Mammary epithelial cell (primary cell): ENCODE measurements at regions of chr2 and their contacts with region 1.

Region 1: GRCh38 chr2:230007931-230008707 is 60.6 kb downstream of the SLC16A14 start:
- DNase-seq: peak; percentile 47
- H3K4me3 ChIP-seq: no peak overlapping the region
- H3K27ac ChIP-seq: no peak overlapping the region
- H3K4me1 ChIP-seq: no peaks in the 10 kb centered on the region
- H3K27me3 ChIP-seq: no peaks in the 10 kb centered on the region
- CTCF ChIP-seq: peak; percentile 75 to 82

Region 2: GRCh38 chr2:229815858-229816257 is 192.3 kb before region 1 on chr2:
- CTCF ChIA-PET with region 1: no interaction called
- dilution Hi-C with region 1: no loop called
- in situ Hi-C with region 1: no loop called
- intact Hi-C with region 1: loop called (anchors 10 kb)
- DNase-seq: peak; percentile 68
- H3K4me3 ChIP-seq: no peak overlapping the region
- H3K27ac ChIP-seq: peak overlapping the region; percentile 49
- H3K4me1 ChIP-seq: peaks cover 12% of the 10 kb centered on the region
- H3K27me3 ChIP-seq: no peaks in the 10 kb centered on the region
- CTCF ChIP-seq: no peak

Region 3: DNA sequence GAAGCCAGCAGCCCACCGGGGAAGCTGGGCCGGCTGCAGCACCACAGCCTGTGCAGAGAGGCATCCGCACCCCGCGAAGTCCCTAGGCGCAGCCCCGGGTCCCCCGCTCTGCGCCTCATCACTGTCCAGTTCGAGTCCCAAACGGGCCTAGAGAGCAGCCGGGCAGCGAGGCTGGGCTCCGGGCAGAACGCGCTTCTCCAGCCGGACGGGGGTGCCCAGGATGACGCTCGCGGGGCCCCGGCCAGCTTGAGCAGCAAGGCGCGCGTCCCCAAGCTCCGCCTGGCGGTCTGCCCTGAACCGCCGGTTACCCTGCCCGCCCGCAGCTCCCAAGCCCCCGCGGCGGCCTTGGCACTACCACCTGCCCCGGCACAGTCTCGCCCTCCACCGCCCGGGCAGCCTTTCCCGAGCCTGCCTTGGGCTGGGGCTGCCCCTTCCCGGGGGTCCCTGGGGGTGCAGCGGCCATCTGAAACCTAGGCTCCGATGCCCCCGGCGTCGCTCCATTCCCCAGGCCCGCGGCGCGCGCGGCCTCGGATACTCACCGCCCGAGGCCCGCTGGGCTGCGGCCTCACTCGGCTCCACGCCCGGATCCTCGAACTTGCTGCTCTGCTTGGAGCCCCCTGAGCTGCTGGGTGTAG is 60.0 kb after region 1 on chr2:
- CTCF ChIA-PET with region 1: no interaction called
- dilution Hi-C with region 1: no loop called
- in situ Hi-C with region 1: no loop called
- intact Hi-C with region 1: loop called (anchors 1 kb)
- DNase-seq: peak; percentile 34
- H3K4me3 ChIP-seq: peak overlapping the region; percentile 38 to 50 (median 50)
- H3K27ac ChIP-seq: no peak overlapping the region
- H3K4me1 ChIP-seq: peaks cover 21% of the 10 kb centered on the region
- H3K27me3 ChIP-seq: no peaks in the 10 kb centered on the region
- CTCF ChIP-seq: peak in 1 of 2 donors; percentile 10

Region 4: DNA sequence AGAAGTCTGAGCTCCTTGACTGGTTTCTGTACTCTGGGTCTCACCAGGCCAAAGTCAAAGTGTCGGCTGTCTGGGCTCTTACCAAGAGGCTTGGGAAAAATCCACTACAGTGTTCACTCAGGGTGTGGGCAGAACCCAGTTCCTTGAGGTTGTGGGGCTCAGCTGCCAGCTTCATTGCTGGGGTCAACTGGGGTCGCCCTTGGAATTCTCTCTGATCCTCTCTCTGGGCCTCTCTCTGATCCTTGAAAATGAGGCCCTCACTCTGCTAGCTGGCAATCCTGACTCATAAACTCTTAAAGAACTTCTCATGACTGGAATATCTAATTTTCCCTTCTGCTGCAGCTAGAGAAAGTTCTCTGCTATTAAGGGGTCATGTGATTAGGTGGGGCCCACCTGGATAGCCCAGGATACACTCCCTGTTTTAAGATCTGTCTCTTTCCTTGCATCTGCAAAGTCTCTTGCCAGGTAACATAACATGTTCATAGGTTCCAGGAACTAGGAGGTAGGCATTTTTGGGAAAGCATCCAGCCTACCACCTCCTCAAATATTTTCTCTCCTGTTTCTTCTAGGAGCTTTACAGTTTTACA is 145.4 kb after region 1 on chr2:
- CTCF ChIA-PET with region 1: no interaction called
- dilution Hi-C with region 1: no loop called
- in situ Hi-C with region 1: loop called in 1 of 2 experiments (anchors 10 kb)
- intact Hi-C with region 1: no loop called
- DNase-seq: no peak
- H3K4me3 ChIP-seq: no peak overlapping the region
- H3K27ac ChIP-seq: no peak overlapping the region
- H3K4me1 ChIP-seq: no peaks in the 10 kb centered on the region
- H3K27me3 ChIP-seq: no peaks in the 10 kb centered on the region
- CTCF ChIP-seq: no peak

Region 5: DNA sequence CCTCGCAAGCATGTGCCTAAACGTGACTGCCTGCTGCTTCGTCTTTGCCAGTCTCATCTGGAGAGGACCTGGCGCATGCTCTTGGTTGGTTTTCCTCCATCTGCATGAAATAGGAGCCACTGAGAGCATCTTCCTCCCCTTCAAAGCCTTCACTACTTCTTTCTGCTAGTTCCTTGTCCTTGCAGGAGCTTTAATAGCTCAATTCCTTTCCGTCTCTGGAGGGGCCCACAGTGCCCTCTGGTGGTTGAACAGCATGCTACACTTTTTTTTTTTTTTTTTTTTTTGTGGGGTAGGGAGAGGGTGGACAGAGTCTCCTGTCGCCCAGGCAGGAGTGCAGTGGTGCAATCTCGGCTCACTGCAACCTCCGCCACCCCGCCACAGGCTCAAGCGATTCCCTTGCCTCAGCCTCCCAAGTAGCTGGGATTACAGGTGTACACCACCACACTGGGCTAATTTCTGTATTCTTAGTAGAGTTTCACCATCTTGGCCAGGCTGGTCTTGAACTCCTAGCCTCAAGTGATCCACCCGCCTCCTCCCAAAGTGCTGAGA is 152.1 kb after region 1 on chr2:
- CTCF ChIA-PET with region 1: interaction called, 8 read pairs
- dilution Hi-C with region 1: no loop called
- in situ Hi-C with region 1: loop called (anchors 10 kb)
- intact Hi-C with region 1: loop called (anchors 1 kb)
- DNase-seq: peak; percentile 37
- H3K4me3 ChIP-seq: no peak overlapping the region
- H3K27ac ChIP-seq: no peak overlapping the region
- H3K4me1 ChIP-seq: no peaks in the 10 kb centered on the region
- H3K27me3 ChIP-seq: no peaks in the 10 kb centered on the region
- CTCF ChIP-seq: peak; percentile 65 to 75

Region 6: GRCh38 chr2:230712443-230713330 is 704.6 kb after region 1 on chr2 and contains the start of gene CAB39:
- CTCF ChIA-PET with region 1: no interaction called
- dilution Hi-C with region 1: no loop called
- in situ Hi-C with region 1: no loop called
- intact Hi-C with region 1: loop called (anchors 10 kb)
- DNase-seq: peak; percentile 84
- H3K4me3 ChIP-seq: peak within 1 kb of the TSS; percentile 70 to 86 (median 84)
- H3K27ac ChIP-seq: peak within 1 kb of the TSS; percentile 79
- H3K4me1 ChIP-seq: peaks cover 20% of the 10 kb centered on the region
- H3K27me3 ChIP-seq: no peaks in the 10 kb centered on the region
- CTCF ChIP-seq: peak; percentile 55
- total RNA-seq, gene CAB39: 68.3 to 115 TPM